Gastrocnemius medialis (tissue), 4 donors: ENCODE measurements at regions of chr2 and their contacts with region 1.

Region 1: GRCh38 chr2:177275041-177276020 is 10.8 kb upstream of the NFE2L2 start:
- DNase-seq: no peak
- ATAC-seq: peak; percentile 64 to 78
- H3K4me3 ChIP-seq: no peak overlapping the region
- H3K27ac ChIP-seq: peak overlapping the region in 2 of 4 donors; percentile 31 to 35
- H3K4me1 ChIP-seq: peaks cover 22 to 42% of the 10 kb centered on the region in 2 donors
- H3K27me3 ChIP-seq: no peaks in the 10 kb centered on the region
- CTCF ChIP-seq: no peak
- POLR2A ChIP-seq: no peak

Region 2: GRCh38 chr2:176464886-176465564 is 810.3 kb before region 1 on chr2:
- in situ Hi-C with region 1: no loop called
- intact Hi-C with region 1: no loop called
- DNase-seq: no peak
- ATAC-seq: no peak
- H3K4me3 ChIP-seq: no peak overlapping the region
- H3K27ac ChIP-seq: no peak overlapping the region
- H3K4me1 ChIP-seq: peaks cover 0 to 12% of the 10 kb centered on the region in 2 donors
- H3K27me3 ChIP-seq: no peaks in the 10 kb centered on the region
- CTCF ChIP-seq: no peak
- POLR2A ChIP-seq: no peak

Region 3: GRCh38 chr2:177325270-177325929 is 50.1 kb after region 1 on chr2:
- in situ Hi-C with region 1: loop called in 1 of 4 experiments (anchors 10 kb)
- intact Hi-C with region 1: no loop called
- DNase-seq: no peak
- ATAC-seq: no peak
- H3K4me3 ChIP-seq: no peak overlapping the region
- H3K27ac ChIP-seq: no peak overlapping the region
- H3K4me1 ChIP-seq: no peaks in the 10 kb centered on the region
- H3K27me3 ChIP-seq: no peaks in the 10 kb centered on the region
- CTCF ChIP-seq: no peak
- POLR2A ChIP-seq: no peak